Activated T-helper 2 cell treated with anti-CD3 and anti-CD28 coated beads, Interferon-gamma antibody, Interleukin-2, Interleukin-4, amounts not matched to agents 10 μg/mL and 5 μg/mL and 100 μg/mL, durations not matched to agents 14 hours and 24 hours and 36 hours (primary cell): ENCODE measurements at regions of chr12 and their contacts with region 1.

Region 1: GRCh38 chr12:24719293-24719721 is 229.6 kb downstream of the BCAT1 start:
- DNase-seq: no peak
- H3K4me3 Mint-ChIP-seq: no peak overlapping the region
- H3K27ac Mint-ChIP-seq: no peak overlapping the region
- H3K4me1 Mint-ChIP-seq: peaks cover 23% of the 10 kb centered on the region
- H3K27me3 Mint-ChIP-seq: no peaks in the 10 kb centered on the region

Region 2: GRCh38 chr12:24561882-24562760 is 157.2 kb before region 1 on chr12:
- intact Hi-C with region 1: loop called (anchors 10 kb)
- DNase-seq: no peak
- H3K4me3 Mint-ChIP-seq: peak overlapping the region; percentile 88
- H3K27ac Mint-ChIP-seq: no peak overlapping the region
- H3K4me1 Mint-ChIP-seq: peaks cover 17% of the 10 kb centered on the region
- H3K27me3 Mint-ChIP-seq: peaks cover 68% of the 10 kb centered on the region

Region 3: GRCh38 chr12:24705741-24706358 is 13.5 kb before region 1 on chr12:
- intact Hi-C with region 1: loop called (anchors 1 kb)
- DNase-seq: no peak
- H3K4me3 Mint-ChIP-seq: no peak overlapping the region
- H3K27ac Mint-ChIP-seq: no peak overlapping the region
- H3K4me1 Mint-ChIP-seq: peaks cover 13% of the 10 kb centered on the region
- H3K27me3 Mint-ChIP-seq: no peaks in the 10 kb centered on the region

Region 4: DNA sequence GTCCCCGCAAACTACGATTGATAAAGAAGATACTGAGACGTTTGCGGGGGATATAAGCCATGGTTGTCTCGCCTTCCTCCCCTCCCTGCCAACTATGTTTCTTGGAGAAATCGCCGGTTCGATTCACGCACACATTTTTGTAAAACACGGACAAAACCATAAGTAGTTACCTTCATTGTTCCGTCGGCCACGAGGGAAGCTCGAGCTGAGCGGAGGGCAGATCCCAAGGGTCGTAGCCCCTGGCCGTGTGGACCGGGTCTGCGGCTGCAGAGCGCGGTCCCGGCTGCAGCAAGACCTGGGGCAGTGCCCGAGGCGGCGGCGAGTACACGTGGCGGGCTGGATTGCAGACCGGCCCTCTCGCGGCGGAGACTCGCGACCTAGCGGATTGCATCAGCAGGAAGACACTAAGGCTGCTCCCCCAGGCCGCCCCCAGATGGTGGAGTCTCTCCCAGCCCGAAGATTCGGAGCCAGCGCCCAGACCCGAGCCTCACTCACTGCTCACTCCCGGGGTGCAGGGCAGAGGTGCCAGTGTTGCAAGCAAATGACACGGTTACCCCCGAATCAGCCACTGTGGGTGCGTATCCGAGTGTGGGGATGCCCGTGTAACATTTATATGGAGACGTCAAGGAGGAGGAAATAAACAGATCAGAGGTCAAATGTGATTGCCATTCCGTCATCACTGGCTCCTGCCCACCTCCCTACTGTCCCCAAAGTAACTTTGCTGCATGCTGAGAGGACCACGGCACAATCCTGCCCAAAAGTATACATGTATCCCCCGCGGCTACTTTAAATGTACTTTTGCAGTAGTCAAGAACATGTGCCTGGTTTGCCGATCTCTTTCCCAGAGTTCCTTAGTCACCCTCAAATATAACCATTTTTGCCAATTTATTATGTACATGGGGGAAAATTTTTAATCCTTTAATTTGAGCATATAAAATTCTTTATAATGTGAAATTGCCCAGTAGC is 229.7 kb after region 1 on chr12 and contains the start of gene BCAT1:
- intact Hi-C with region 1: loop called (anchors 5 kb)
- DNase-seq: peak; percentile 18
- H3K4me3 Mint-ChIP-seq: peak within 1 kb of the TSS; percentile 82
- H3K27ac Mint-ChIP-seq: peak within 1 kb of the TSS; percentile 72
- H3K4me1 Mint-ChIP-seq: peaks cover 42% of the 10 kb centered on the region
- H3K27me3 Mint-ChIP-seq: peaks cover 45% of the 10 kb centered on the region
- total RNA-seq, gene BCAT1: 12.7 and 12.9 TPM in 2 replicates

Region 5: GRCh38 chr12:25855716-25856115 is 1136.4 kb after region 1 on chr12:
- intact Hi-C with region 1: no loop called
- DNase-seq: no peak
- H3K4me3 Mint-ChIP-seq: no peak overlapping the region
- H3K27ac Mint-ChIP-seq: no peak overlapping the region
- H3K4me1 Mint-ChIP-seq: peaks cover 4% of the 10 kb centered on the region
- H3K27me3 Mint-ChIP-seq: peaks cover 2% of the 10 kb centered on the region